Transverse colon (tissue), 4 donors: ENCODE measurements at regions of chr9 and their contacts with region 1.

Region 1: GRCh38 chr9:113131689-113132151 is 19.1 kb upstream of the SLC31A2 start:
- DNase-seq: no peak
- H3K4me3 ChIP-seq: no peak overlapping the region
- H3K27ac ChIP-seq: no peak overlapping the region
- H3K4me1 ChIP-seq: no peaks in the 10 kb centered on the region
- H3K27me3 ChIP-seq: peaks cover 28% of the 10 kb centered on the region
- CTCF ChIP-seq: no peak
- EP300 ChIP-seq: no peak
- POLR2A ChIP-seq: no peak

Region 2: DNA sequence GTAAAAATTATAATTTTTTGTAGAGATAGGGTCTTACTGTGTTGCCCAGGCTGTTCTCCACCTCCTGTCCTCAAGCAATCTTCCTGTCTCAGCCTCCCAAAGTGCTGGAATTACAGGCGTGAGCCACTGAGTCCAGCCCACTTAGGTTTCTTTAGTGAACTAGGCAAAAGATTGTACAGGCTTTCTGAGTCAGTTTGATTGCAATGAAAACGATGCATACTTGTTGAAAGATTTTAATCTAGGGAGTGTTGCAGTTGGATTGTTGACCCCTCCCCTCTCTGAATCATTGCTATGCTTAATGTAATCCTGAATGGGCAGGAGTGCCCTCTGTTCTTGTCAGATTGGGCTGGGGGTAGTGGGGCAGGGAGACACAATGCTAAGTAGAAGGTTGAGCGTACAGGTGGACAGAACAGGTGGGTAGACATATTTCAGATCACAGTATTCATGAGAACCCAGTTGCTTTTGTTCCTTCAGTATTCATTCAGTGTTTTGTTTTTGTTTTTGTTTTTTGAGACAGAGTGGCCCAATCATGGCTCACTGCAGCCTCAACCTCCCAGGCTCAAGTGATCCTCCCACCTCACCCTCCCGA is 575.1 kb before region 1 on chr9:
- in situ Hi-C with region 1: no loop called
- intact Hi-C with region 1: no loop called
- DNase-seq: no peak
- H3K4me3 ChIP-seq: no peak overlapping the region
- H3K27ac ChIP-seq: peak overlapping the region; percentile 47 to 72 (median 66)
- H3K4me1 ChIP-seq: peaks cover 0 to 10% (median 6%) of the 10 kb centered on the region in 4 donors
- H3K27me3 ChIP-seq: no peaks in the 10 kb centered on the region
- CTCF ChIP-seq: no peak
- EP300 ChIP-seq: no peak
- POLR2A ChIP-seq: no peak

Region 3: DNA sequence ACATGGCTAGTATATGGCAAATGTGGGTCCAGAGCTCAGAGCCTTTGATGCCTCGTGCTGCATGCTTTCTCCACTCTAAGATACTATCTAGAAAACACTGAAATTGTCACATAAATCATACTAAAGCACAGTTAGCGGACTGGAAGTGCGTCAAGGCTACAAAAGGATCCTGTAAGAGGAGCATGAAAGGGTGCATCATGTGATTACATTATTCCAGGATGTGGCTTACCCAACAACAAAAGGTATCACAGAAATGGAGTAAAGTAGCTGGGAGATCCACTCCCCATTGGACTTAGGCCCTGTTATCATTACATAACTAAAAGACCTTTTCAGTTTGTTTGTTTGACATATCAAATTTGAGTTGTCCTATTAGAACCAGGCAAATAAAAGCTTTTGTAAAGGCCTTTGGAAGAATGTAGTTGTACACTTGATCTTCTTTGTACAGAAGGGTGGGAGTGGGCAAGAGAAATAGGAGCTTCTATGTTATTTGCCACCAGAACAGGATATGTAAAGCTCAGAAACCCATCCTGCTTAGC is 96.5 kb after region 1 on chr9:
- in situ Hi-C with region 1: loop called in 1 of 4 experiments (anchors 25 kb)
- intact Hi-C with region 1: no loop called
- DNase-seq: no peak
- H3K4me3 ChIP-seq: no peak overlapping the region
- H3K27ac ChIP-seq: no peak overlapping the region
- H3K4me1 ChIP-seq: peaks cover 0 to 14% (median 6%) of the 10 kb centered on the region in 4 donors
- H3K27me3 ChIP-seq: no peaks in the 10 kb centered on the region
- CTCF ChIP-seq: no peak
- EP300 ChIP-seq: no peak
- POLR2A ChIP-seq: no peak